Activated CD4-positive, alpha-beta T cell treated with anti-CD3 and anti-CD28 coated beads, Interleukin-2, amount 10 ng/mL, durations not matched to agents 24 days and 14 days (primary cell): ENCODE measurements at regions of chr2 and their contacts with region 1.

Region 1: DNA sequence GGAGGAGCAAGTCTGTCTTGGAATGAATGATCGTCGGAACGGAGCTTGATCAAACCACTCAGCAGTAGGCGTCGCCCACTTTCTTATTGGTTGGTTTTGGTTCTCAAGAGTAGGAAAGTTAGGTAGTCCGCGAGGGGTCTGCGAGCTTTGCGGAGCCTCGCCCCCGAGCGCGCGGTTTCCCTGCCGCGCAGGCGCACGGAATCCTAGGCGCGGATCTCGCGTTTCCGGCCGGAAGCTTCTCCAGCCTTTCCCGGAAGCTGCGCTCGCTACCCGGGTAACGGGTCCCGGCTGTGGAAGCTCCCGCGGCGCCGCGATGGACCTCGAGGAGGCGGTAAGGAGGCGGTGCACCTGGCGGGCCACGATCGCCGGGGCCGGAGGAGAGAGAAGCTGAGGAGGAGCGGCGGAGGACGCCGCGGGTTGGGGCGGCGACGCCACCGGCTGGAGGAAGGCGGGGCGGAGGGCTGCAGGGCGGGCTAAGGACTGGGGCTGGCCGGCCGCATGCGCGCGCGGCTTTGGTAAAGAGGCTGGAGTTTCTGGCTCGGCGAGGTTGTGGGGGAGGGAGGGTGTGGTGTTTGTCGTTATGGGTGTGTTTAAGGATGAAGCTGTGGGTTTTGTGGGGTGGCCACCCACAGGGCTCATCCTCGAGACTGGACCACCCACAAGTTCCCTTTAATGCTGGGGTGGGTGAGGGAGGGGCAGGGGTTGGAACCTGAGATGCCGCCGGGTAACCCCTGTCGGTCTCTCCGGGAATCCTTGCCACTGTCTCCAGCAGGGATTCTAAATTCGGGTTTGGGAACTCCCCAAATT is at the start of gene TAF1B:
- DNase-seq: peak; percentile 97
- H3K4me3 Mint-ChIP-seq: peak within 1 kb of the TSS; percentile 92
- H3K27ac Mint-ChIP-seq: peak within 1 kb of the TSS; percentile 92
- H3K4me1 Mint-ChIP-seq: peaks cover 34% of the 10 kb centered on the region
- H3K27me3 Mint-ChIP-seq: no peaks in the 10 kb centered on the region
- total RNA-seq, gene TAF1B: 21.9 and 22.7 TPM in 2 replicates

Region 2: GRCh38 chr2:8609357-8609811 is 1234.0 kb before region 1 on chr2:
- intact Hi-C with region 1: no loop called
- DNase-seq: no peak
- H3K4me3 Mint-ChIP-seq: peak overlapping the region; percentile 39
- H3K27ac Mint-ChIP-seq: no peak overlapping the region
- H3K4me1 Mint-ChIP-seq: peaks cover 25% of the 10 kb centered on the region
- H3K27me3 Mint-ChIP-seq: no peaks in the 10 kb centered on the region

Region 3: DNA sequence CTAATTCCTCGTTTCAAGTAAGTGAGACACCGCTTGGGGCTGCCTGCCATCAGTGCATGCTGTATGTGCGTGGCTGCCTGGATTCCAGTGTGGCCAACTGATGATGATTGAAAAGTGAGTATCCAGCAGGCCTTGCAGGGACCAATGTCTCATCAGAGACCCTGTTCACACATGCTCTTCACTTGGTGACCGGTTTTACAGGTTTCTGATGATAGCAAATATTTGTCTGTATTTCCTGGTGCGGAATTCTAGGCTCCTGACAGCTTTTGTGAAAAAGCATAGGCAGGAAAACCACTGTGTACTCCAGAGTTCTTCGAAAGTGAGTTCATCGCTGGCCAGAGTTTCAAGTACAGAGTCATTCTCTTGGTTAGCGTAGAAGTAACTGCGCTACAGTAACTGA is 198.8 kb before region 1 on chr2:
- intact Hi-C with region 1: no loop called
- DNase-seq: no peak
- H3K4me3 Mint-ChIP-seq: no peak overlapping the region
- H3K27ac Mint-ChIP-seq: no peak overlapping the region
- H3K4me1 Mint-ChIP-seq: peaks cover 32% of the 10 kb centered on the region
- H3K27me3 Mint-ChIP-seq: peaks cover 18% of the 10 kb centered on the region

Region 4: DNA sequence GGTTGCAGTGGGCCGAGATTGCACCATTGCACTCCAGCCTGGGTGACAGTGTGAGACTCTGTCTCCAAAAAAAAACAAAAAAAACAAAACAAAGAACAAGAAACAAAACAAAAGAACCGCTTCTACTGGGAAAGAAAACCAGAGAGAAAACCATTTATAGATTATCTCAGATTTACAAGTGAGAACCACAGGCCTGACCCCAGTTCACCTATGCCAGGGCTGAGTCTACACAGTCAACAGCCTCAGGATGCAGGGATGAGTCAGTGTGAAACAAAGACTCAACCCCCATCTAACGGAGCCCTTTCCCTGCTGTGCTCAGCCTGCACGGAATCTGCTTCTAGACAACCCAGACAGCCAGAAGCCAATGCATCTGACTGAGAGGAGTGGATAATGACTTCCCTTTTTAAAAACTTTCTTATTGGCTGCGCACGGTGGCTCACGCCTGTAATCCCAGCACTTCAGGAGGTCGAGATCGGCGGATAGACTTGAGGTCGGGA is 187.1 kb before region 1 on chr2:
- intact Hi-C with region 1: no loop called
- DNase-seq: peak; percentile 88
- H3K4me3 Mint-ChIP-seq: peak overlapping the region; percentile 25
- H3K27ac Mint-ChIP-seq: peak overlapping the region; percentile 93
- H3K4me1 Mint-ChIP-seq: peaks cover 46% of the 10 kb centered on the region
- H3K27me3 Mint-ChIP-seq: peaks cover 16% of the 10 kb centered on the region

Region 5: DNA sequence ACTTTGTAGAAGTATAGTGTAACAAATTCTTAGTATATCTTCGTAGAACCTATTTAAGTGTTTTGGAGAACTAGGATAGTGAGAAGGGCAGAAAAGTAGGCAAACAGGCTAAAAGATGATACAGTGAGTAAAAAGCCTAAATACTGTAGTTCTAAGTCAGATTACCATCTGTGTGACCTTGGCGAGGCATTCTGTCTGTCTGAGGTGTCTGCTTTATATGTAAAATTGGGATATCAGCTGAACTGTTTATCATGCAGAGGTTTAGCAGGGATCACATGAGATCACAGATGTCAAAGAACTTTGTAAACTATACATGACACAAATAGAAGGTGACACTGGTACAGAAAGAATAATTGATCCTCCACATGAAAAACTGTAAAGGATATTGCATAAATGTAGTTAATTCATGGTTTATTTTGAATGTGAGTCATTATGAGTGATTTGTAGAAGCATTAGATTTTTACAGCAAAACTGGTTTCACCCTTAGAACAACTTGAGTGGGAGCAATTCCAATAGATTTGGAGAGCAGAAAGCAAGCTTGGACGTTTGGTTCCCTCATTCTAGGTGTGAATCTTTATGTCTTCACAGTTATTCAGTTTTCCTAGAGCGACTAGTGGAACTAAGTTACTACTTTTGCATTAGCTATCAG is 41.7 kb after region 1 on chr2:
- intact Hi-C with region 1: no loop called
- DNase-seq: no peak
- H3K4me3 Mint-ChIP-seq: no peak overlapping the region
- H3K27ac Mint-ChIP-seq: no peak overlapping the region
- H3K4me1 Mint-ChIP-seq: peaks cover 7% of the 10 kb centered on the region
- H3K27me3 Mint-ChIP-seq: no peaks in the 10 kb centered on the region

Region 6: GRCh38 chr2:9897331-9897737 is 53.9 kb after region 1 on chr2:
- intact Hi-C with region 1: loop called (anchors 2 kb)
- DNase-seq: no peak
- H3K4me3 Mint-ChIP-seq: no peak overlapping the region
- H3K27ac Mint-ChIP-seq: no peak overlapping the region
- H3K4me1 Mint-ChIP-seq: peaks cover 14% of the 10 kb centered on the region
- H3K27me3 Mint-ChIP-seq: no peaks in the 10 kb centered on the region

Region 7: DNA sequence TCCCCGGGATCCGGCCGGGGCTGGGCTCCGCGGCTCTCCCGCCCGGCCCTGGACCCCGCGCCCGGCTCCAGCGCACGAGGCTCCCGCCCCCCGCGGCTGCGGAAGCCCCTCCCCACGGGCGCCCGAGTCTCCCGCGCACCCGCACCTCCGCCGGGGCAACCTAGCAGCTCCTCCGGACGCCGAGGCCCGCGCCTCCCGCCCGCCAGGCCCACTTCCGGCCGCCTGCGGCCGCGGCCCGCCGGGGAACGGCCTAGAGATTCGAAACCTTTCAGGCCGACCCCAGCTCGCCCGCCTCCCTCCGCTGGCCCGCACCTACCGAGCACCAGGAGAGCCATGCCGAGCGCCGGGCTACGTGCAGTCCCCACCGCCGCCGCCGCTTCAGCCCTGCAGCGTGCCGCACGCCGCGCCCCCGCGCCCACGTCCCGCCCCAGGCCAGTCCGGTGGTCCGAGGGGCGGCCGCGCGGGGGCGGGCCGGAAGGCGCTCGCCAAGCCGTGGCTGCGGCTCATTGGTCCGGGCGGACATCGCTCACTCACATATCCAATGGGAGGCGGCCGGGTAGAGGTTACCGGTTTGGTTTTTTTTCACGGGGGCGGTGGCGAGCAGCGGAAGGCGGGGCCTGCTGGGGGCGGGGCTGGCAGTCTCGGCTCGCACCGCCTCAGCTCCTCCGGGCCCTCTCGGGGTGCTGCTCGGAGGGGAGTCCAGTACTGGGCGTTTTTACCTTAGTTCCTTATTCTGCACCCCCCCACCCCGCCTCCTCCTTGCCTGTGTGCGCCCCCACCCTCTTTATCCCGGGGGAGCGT is 969.1 kb after region 1 on chr2 and contains the start of gene PDIA6:
- intact Hi-C with region 1: loop called (anchors 2 kb)
- DNase-seq: peak; percentile 99
- H3K4me3 Mint-ChIP-seq: peak within 1 kb of the TSS; percentile 94
- H3K27ac Mint-ChIP-seq: peak within 1 kb of the TSS; percentile 95
- H3K4me1 Mint-ChIP-seq: peaks cover 34% of the 10 kb centered on the region
- H3K27me3 Mint-ChIP-seq: peaks cover 17% of the 10 kb centered on the region
- total RNA-seq, gene PDIA6: 183 and 187 TPM in 2 replicates